Sciatic nerve (tissue), 2 donors: ENCODE measurements at regions of chr20 and their contacts with region 1.

Region 1: DNA sequence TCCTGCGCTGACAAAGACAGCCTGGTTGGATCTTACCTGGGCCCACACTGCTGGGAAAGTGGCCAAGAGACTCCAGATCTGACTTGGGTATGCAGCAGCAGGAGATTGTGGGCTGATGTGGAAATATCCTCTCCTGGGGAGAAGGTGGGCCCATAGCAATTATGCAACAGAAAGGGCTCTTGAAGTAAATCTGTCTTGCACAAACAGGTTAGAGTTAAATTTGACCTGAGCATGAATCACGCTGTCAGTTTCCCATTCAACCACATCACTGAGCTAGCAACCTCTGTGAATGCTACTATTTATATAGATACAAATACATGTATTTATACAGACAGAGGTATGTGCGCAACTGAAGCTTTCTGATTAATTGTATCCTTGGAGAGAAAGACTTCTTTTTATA is 28.3 kb upstream of the PDYN start:
- DNase-seq: no peak
- ATAC-seq: no peak

Region 2: GRCh38 chr20:1934721-1935573 is 87.2 kb before region 1 on chr20:
- intact Hi-C with region 1: no loop called
- DNase-seq: peak; percentile 75
- ATAC-seq: peak; percentile 84

Region 3: DNA sequence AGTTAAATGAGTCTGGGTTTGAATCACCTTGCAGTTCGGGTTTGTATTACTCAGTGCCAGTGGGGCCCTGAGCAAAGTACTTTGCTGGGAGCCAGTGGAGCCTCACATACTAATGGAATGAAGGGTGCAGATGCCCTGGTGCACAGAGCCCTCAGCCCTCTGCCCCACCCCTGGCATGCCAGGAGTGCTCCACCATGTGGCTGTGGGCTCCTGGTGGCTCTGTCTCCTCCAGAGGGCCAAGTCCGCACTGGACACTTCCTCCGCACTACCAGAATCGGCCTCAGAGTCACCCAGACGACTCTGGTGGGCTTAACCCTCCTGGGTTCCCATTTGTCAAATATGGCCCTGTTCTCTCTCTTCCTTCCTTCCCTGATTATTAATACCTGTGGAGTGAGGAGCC is 173.5 kb after region 1 on chr20:
- intact Hi-C with region 1: no loop called
- DNase-seq: no peak
- ATAC-seq: no peak

Region 4: DNA sequence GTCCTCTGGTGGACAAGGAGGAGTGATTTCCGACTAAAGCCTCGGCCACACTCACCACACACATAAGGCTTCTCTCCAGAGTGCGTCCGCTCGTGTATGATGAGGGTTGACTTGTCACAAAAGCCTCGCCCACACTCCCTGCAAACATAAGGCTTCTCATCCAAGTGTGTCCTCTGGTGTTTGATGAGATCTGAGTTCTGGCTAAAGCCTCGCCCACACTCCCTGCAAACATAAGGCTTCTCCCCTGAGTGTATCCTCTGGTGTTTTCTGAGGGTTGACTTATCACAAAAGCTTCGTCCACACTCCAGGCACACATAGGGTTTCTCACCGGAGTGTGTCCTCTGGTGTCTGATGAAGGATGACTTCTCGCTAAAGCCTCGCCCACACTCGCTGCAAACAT is 461.3 kb after region 1 on chr20:
- intact Hi-C with region 1: loop called (anchors 5 kb)
- DNase-seq: no peak
- ATAC-seq: no peak

Region 5: GRCh38 chr20:3646651-3647050 is 1624.5 kb after region 1 on chr20:
- intact Hi-C with region 1: no loop called
- DNase-seq: peak; percentile 36
- ATAC-seq: no peak